Dendritic cell treated with granulocyte-macrophage colony-stimulating factor and Interleukin-4, amounts not matched to agents 40 ng/mL and 50 ng/mL, for 4 days (primary cell): ENCODE measurements at regions of chr6 and their contacts with region 1.

Region 1: GRCh38 chr6:28981833-28982475 is 23.2 kb downstream of the ZNF311 start:
- H3K4me3 Mint-ChIP-seq: peak overlapping the region; percentile 76
- H3K27ac Mint-ChIP-seq: peak overlapping the region; percentile 59
- H3K4me1 Mint-ChIP-seq: peaks cover 37% of the 10 kb centered on the region
- H3K27me3 Mint-ChIP-seq: peaks cover 20% of the 10 kb centered on the region

Region 2: GRCh38 chr6:28838634-28839442 is 143.1 kb before region 1 on chr6:
- intact Hi-C with region 1: loop called (anchors 5 kb)
- H3K4me3 Mint-ChIP-seq: peak overlapping the region; percentile 83
- H3K27ac Mint-ChIP-seq: peak overlapping the region; percentile 70
- H3K4me1 Mint-ChIP-seq: peaks cover 22% of the 10 kb centered on the region
- H3K27me3 Mint-ChIP-seq: peaks cover 79% of the 10 kb centered on the region

Region 3: GRCh38 chr6:28863604-28864320 is 118.2 kb before region 1 on chr6:
- intact Hi-C with region 1: loop called (anchors 10 kb)
- H3K4me3 Mint-ChIP-seq: peak overlapping the region; percentile 87
- H3K27ac Mint-ChIP-seq: peak overlapping the region; percentile 60
- H3K4me1 Mint-ChIP-seq: peaks cover 27% of the 10 kb centered on the region
- H3K27me3 Mint-ChIP-seq: peaks cover 41% of the 10 kb centered on the region

Region 4: GRCh38 chr6:28895134-28895812 is 86.7 kb before region 1 on chr6:
- intact Hi-C with region 1: loop called (anchors 1 kb)
- H3K4me3 Mint-ChIP-seq: peak overlapping the region; percentile 90
- H3K27ac Mint-ChIP-seq: peak overlapping the region; percentile 99
- H3K4me1 Mint-ChIP-seq: peaks cover 27% of the 10 kb centered on the region
- H3K27me3 Mint-ChIP-seq: peaks cover 8% of the 10 kb centered on the region

Region 5: DNA sequence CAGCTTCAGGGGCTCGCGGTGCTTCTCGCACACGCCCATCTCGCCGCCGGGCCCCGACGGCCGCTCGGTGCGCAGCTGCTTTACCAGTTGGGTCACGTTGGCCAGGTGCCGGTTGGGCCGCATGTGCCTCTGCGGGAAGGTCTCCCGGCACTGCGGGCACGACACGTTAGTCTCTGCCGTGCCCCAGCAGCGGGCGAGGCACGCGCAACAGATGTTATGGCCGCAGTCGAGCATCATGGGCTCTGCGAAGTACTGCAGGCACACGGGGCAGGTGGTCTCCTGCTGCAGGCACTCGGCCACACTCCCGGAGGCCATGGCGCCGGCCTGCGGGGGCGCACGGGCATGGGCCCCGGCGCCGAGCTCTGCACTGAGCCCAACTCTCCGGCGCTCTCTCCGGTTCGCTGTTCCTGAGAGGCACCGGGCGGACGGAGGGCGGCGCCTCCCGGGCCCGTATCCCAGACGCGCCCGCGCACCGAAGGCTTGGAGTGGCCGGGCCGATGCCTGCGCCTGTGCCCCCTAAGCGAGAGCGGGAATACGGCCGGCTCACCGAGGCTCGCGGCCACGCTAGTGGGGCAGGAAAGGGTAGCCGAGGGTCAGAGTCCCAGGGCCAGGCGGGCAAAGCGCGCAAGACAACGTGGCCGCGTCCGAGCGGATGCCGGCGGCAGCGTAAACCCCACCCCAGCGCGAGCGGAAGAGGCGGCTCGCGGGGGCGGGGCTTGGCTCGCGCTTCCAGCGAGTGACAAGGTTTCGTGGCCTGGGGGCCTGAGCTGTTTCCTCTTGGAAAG is 58.4 kb before region 1 on chr6 and contains the start of gene TRIM27:
- intact Hi-C with region 1: loop called (anchors 10 kb)
- H3K4me3 Mint-ChIP-seq: peak within 1 kb of the TSS; percentile 96
- H3K27ac Mint-ChIP-seq: peak within 1 kb of the TSS; percentile 95
- H3K4me1 Mint-ChIP-seq: peaks cover 39% of the 10 kb centered on the region
- H3K27me3 Mint-ChIP-seq: no peaks in the 10 kb centered on the region

Region 6: GRCh38 chr6:28940858-28941680 is 40.9 kb before region 1 on chr6:
- intact Hi-C with region 1: loop called (anchors 1 kb)
- H3K4me3 Mint-ChIP-seq: peak overlapping the region; percentile 86
- H3K27ac Mint-ChIP-seq: peak overlapping the region; percentile 75
- H3K4me1 Mint-ChIP-seq: peaks cover 56% of the 10 kb centered on the region
- H3K27me3 Mint-ChIP-seq: peaks cover 1% of the 10 kb centered on the region

Region 7: DNA sequence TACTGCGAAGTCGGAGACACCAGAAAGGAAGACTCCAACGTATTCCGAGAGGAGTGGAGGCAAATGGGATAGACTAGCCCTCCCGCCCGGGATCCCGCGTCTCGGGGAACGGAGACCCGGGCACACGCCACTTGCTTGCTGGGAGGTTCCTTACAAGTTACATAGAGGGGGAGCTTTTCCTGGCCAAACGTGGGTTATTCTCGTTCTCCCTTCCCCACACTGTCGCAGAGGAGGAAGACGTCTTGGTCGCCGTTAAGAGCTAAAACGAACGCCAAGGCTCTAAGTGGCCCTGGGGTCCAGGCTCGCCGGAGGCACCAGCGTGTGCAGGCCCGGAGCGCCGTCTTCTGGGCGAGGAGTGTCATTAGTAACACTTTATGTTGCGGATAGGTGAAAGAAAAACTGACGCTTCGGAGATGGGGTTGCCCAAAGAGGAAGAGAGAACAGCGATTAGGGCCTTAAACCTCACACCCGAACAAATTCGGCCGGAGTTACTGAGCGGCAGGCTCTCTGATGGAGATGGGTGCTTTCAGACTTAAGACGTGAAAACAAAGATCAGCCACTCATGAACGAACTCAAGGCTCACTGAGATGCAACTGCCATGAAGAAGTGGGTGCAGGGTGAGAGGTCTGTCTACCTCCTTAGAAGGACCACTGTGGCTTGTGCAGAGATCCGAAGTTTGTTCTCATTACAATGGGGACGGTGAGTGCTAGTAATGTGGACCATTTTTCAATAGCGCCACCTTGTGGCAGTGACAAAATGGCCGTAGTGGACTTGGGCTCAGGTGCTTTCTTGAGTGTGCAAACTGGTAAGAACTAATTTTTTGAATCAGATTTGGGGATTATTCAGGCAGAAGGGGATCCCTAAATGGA is 34.8 kb after region 1 on chr6:
- intact Hi-C with region 1: loop called (anchors 2 kb)
- H3K4me3 Mint-ChIP-seq: peak overlapping the region; percentile 80
- H3K27ac Mint-ChIP-seq: peak overlapping the region; percentile 46
- H3K4me1 Mint-ChIP-seq: peaks cover 14% of the 10 kb centered on the region
- H3K27me3 Mint-ChIP-seq: peaks cover 59% of the 10 kb centered on the region